CD4-positive, alpha-beta T cell (primary cell): ENCODE measurements at regions of chr17 and their contacts with region 1.

Region 1: GRCh38 chr17:44123356-44124117 is at the start of gene HDAC5:
- DNase-seq: peak; percentile 93 to 99 (median 96)
- ATAC-seq: peak; percentile 94
- H3K4me3 ChIP-seq: peak within 1 kb of the TSS; percentile 73
- H3K4me3 Mint-ChIP-seq: peak within 1 kb of the TSS; percentile 99
- H3K27ac ChIP-seq: peak within 1 kb of the TSS; percentile 57 to 83
- H3K27ac Mint-ChIP-seq: peak within 1 kb of the TSS; percentile 99
- H3K4me1 ChIP-seq: peaks cover 52% of the 10 kb centered on the region
- H3K4me1 Mint-ChIP-seq: peaks cover 47% of the 10 kb centered on the region
- H3K27me3 ChIP-seq: no peaks in the 10 kb centered on the region
- H3K27me3 Mint-ChIP-seq: no peaks in the 10 kb centered on the region
- CTCF ChIP-seq: peak; percentile 66
- total RNA-seq, gene HDAC5: 92.0 to 92.5 TPM

Region 2: DNA sequence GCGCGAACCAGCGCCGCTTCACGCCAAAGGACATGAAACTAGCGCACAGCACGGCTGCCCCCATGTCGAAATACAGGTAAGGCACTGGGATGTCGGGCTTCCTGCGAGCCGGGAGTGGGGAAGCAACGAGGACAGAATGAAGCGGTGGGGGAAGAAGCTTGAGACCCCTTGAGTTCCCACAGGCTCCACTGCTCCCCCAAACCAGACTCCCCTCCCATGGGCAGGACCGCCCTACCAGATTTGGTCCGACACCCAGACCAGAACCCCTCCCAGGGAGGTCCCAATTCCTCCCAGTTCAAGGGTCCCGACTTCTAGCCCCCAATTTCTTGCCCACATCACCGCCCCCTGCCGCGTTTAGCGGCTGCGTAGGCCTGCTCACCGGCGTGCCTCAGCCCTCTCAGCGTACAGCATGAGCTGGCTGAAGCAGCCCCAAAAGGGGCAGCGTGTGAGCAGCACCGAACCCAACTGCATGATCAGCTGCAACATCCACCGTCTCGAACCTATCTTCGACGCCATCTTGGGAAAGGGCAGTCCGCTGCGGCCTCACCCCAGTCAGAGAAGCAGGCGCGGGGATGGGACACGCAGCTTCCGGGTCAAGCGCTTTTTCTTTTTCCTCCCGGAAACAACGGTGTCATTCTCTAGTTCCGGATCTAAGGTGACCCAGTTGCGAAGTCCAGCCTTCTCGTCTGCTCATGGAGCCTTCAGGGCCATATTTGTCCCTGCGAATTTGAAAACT is 108.9 kb before region 1 on chr17 and contains the start of gene TMEM101:
- CTCF ChIA-PET with region 1: no interaction called
- POLR2A ChIA-PET with region 1: interaction called, 3 read pairs
- intact Hi-C with region 1: loop called in 1 of 2 experiments (anchors 2 kb)
- DNase-seq: peak; percentile 81 to 95 (median 86)
- ATAC-seq: peak; percentile 99
- H3K4me3 ChIP-seq: peak within 1 kb of the TSS; percentile 94
- H3K4me3 Mint-ChIP-seq: peak within 1 kb of the TSS; percentile 100
- H3K27ac ChIP-seq: no peak within 1 kb of the TSS
- H3K27ac Mint-ChIP-seq: peak within 1 kb of the TSS; percentile 87
- H3K4me1 ChIP-seq: peaks cover 19% of the 10 kb centered on the region
- H3K4me1 Mint-ChIP-seq: peaks cover 22% of the 10 kb centered on the region
- H3K27me3 ChIP-seq: no peaks in the 10 kb centered on the region
- H3K27me3 Mint-ChIP-seq: peaks cover 5% of the 10 kb centered on the region
- CTCF ChIP-seq: no peak
- total RNA-seq, gene TMEM101: 8.8 to 9.7 TPM

Region 3: GRCh38 chr17:44110823-44111633 is 12.5 kb before region 1 on chr17:
- CTCF ChIA-PET with region 1: interaction called, 3 read pairs
- POLR2A ChIA-PET with region 1: interaction called, 23 read pairs
- intact Hi-C with region 1: no loop called
- DNase-seq: peak; percentile 35 to 77 (median 60)
- ATAC-seq: peak; percentile 70
- H3K4me3 ChIP-seq: peak overlapping the region; percentile 7
- H3K4me3 Mint-ChIP-seq: no peak overlapping the region
- H3K27ac ChIP-seq: no peak overlapping the region
- H3K27ac Mint-ChIP-seq: no peak overlapping the region
- H3K4me1 ChIP-seq: peaks cover 28% of the 10 kb centered on the region
- H3K4me1 Mint-ChIP-seq: peaks cover 31% of the 10 kb centered on the region
- H3K27me3 ChIP-seq: no peaks in the 10 kb centered on the region
- H3K27me3 Mint-ChIP-seq: no peaks in the 10 kb centered on the region
- CTCF ChIP-seq: no peak

Region 4: GRCh38 chr17:44167181-44167861 is 43.8 kb after region 1 on chr17:
- CTCF ChIA-PET with region 1: interaction called, 3 read pairs
- POLR2A ChIA-PET with region 1: interaction called, 15 read pairs
- intact Hi-C with region 1: no loop called
- DNase-seq: no peak
- ATAC-seq: no peak
- H3K4me3 ChIP-seq: no peak overlapping the region
- H3K4me3 Mint-ChIP-seq: no peak overlapping the region
- H3K27ac ChIP-seq: no peak overlapping the region
- H3K27ac Mint-ChIP-seq: no peak overlapping the region
- H3K4me1 ChIP-seq: peaks cover 7% of the 10 kb centered on the region
- H3K4me1 Mint-ChIP-seq: peaks cover 10% of the 10 kb centered on the region
- H3K27me3 ChIP-seq: no peaks in the 10 kb centered on the region
- H3K27me3 Mint-ChIP-seq: no peaks in the 10 kb centered on the region
- CTCF ChIP-seq: no peak

Region 5: DNA sequence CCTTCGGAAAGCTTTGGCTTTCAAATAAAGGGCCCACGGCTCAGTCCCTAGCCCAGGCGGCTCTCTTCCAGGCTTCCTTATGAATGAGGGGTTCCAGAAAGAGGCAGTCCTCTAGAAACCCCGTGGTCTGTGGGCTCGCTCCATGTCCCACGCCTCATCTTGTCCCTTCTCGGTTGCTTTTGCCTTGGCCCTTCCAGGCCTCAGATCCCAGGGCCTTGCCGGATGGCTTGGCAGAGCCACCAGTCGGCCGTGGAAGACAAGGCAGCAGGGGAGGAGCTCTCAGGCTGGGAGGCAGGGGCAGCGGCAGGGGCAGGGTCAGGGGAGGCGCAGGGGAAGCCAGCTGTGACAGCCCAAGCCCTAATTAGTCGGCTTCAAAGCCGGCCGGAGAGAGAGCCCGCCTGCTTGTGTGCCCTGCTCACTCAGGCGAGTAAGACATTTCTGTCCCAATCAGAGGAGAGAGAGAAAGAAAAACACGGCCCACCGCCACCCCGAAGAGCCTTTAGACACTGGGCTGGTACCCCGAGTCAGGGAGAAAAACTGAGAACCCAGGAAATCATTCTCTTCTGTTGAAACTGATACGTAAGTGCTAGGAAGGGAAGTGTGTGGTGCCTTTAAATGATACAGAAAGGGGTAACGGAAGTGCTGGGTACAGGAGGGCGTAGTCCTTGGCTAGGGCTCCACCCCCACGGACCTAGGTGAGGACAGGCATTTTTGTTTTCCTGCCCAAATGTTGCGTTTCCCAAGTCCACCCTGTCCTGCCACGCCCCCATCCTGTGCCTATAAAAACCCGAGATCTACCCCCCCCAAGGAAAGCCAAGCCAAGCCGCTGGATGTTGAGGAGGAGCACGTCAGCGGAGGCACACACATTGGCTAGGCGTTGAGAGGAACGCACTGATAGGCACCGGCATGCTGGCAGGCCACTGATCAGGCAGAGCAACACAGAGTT is 505.0 kb after region 1 on chr17:
- CTCF ChIA-PET with region 1: no interaction called
- POLR2A ChIA-PET with region 1: no interaction called
- intact Hi-C with region 1: no loop called
- DNase-seq: peak in 1 of 14 experiments; percentile 23
- ATAC-seq: peak; percentile 48
- H3K4me3 ChIP-seq: no peak overlapping the region
- H3K4me3 Mint-ChIP-seq: peak overlapping the region; percentile 34
- H3K27ac ChIP-seq: no peak overlapping the region
- H3K27ac Mint-ChIP-seq: no peak overlapping the region
- H3K4me1 ChIP-seq: no peaks in the 10 kb centered on the region
- H3K4me1 Mint-ChIP-seq: no peaks in the 10 kb centered on the region
- H3K27me3 ChIP-seq: peaks cover 7 to 10% of the 10 kb centered on the region in 2 experiments
- H3K27me3 Mint-ChIP-seq: peaks cover 39% of the 10 kb centered on the region
- CTCF ChIP-seq: no peak